Esophagus squamous epithelium (tissue), 5 donors: ENCODE measurements at regions of chr11 and their contacts with region 1.

Region 1: DNA sequence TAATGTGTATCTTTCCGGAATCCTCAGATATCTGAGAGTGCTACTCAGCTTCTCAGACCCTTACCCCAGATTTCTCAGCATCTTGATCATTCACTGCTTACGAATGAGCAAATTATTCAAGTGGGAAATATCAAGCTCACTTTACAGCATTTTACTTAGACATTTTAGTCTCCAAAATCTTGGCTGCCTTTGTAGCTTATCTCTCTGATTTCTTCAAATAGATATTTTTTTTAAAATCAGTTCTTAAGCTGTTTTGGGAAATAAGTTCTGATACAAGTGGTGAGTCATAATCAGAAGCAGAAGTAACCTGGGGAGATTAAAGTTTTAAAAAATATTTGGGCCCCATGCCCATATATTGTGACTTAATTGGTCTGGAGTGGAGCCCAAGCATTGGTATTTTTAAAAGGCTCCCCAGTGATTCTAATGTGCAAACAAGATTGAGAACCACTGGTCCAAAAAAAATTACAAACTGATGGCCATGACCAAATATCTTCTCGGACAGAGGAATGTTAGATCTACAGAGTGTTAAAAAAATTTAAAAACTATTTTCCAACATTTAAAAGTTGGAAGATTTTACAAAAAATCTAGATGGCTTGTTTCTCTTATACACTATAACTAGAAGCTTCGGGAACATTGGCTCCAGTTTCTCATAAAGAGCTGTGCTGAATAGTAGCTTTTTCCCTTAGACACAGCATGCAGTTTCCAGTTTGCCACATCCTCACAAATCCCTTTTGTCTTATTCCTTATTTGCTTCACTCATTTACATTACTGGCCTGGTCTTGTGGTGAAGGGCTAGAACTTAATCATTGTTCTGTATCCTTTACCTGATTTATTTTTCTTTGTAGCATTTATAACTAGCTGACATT is 87.8 kb upstream of the BMAL1 start:
- DNase-seq: no peak
- H3K4me3 ChIP-seq: no peak overlapping the region
- H3K27ac ChIP-seq: no peak overlapping the region
- H3K4me1 ChIP-seq: peaks cover 0 to 4% (median 0%) of the 10 kb centered on the region in 3 donors
- H3K27me3 ChIP-seq: no peaks in the 10 kb centered on the region
- CTCF ChIP-seq: no peak
- POLR2A ChIP-seq: no peak

Region 2: GRCh38 chr11:12963792-12964536 is 225.8 kb before region 1 on chr11:
- intact Hi-C with region 1: loop called (anchors 5 kb)
- DNase-seq: no peak
- H3K4me3 ChIP-seq: no peak overlapping the region
- H3K27ac ChIP-seq: no peak overlapping the region
- H3K4me1 ChIP-seq: peaks cover 0 to 19% (median 0%) of the 10 kb centered on the region in 3 donors
- H3K27me3 ChIP-seq: no peaks in the 10 kb centered on the region
- CTCF ChIP-seq: peak; percentile 57 to 90 (median 84)
- POLR2A ChIP-seq: no peak

Region 3: DNA sequence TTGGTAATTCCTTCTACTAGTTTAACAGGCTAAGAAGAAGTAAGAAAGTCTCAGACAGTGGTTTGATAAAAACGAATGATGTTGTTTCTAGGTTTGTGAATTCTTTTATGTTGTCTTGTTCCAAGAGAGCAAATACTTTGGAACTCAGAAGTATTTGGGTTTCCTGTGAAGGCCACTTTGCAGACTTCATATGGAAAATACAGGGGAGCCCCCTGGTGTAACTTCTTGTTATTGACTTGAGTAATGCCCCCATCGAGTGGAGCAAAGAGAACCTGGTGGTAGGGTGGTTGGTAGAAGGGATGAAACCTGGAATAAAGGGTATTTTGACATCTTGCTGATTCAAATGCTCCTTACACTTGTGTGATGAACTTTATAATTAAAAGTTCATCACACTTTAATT is 346.0 kb after region 1 on chr11:
- intact Hi-C with region 1: no loop called
- DNase-seq: no peak
- H3K4me3 ChIP-seq: no peak overlapping the region
- H3K27ac ChIP-seq: no peak overlapping the region
- H3K4me1 ChIP-seq: no peaks in the 10 kb centered on the region
- H3K27me3 ChIP-seq: peaks cover 0 to 10% (median 0%) of the 10 kb centered on the region in 4 donors
- CTCF ChIP-seq: no peak
- POLR2A ChIP-seq: no peak

Region 4: DNA sequence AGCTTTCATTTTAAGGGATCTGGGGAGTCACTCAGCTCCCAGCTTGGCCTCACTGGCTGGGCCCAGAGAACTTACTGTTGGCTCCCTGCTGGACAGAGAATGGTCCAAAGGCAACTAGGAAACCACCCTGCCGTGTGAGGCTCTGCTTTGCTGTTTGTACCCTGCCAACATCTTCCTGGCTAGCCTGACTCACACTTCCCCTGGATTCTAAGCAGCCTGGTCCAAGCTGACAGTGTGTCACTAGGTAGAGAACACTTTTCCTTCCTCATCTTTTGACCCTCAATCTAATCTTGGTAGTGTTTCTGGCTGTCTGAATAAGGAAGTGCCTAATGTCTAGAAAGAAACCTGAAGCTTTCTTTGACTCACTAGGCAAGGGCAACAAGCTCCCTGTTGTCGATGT is 555.4 kb after region 1 on chr11:
- intact Hi-C with region 1: no loop called
- DNase-seq: no peak
- H3K4me3 ChIP-seq: no peak overlapping the region
- H3K27ac ChIP-seq: no peak overlapping the region
- H3K4me1 ChIP-seq: no peaks in the 10 kb centered on the region
- H3K27me3 ChIP-seq: peaks cover 0 to 4% (median 0%) of the 10 kb centered on the region in 4 donors
- CTCF ChIP-seq: no peak
- POLR2A ChIP-seq: no peak